ENCODE measurements at regions of chrX and their contacts with region 1.

Region 1: DNA sequence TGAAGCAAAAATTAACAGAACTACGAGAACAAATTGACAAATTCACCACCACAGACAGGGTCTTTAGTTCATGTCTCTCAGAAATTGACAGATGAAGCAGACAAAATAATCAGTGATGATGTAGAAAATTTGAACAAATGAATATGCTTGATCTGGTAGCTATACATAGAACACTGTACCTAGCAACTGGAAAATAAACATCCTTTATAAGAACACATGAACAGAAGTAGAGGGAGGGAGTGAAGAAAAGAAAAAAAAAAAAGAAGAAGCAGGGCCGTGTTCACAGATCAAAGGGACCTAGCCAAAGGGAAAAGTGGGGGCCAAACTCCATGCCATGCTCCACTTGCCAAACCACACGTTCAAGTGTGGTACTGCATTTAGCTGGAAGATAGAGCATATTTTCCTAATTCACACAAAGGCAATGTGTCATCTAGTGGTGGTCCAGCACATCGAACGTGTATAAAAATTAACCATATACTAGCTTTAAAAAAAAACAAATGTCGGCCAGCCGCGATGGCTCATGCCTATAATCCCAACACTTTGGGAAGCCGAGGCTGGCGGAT is 5.6 kb upstream of the THOC2 start:
- DNase-seq: no peak
- ATAC-seq: no peak
- H3K4me3 ChIP-seq: no peak overlapping the region
- H3K4me3 Mint-ChIP-seq: no peak overlapping the region
- H3K27ac ChIP-seq: no peak overlapping the region
- H3K27ac Mint-ChIP-seq: no peak overlapping the region
- H3K4me1 ChIP-seq: no peaks in the 10 kb centered on the region
- H3K4me1 Mint-ChIP-seq: peaks cover 0 to 3% (median 2%) of the 10 kb centered on the region in 3 donors
- H3K27me3 ChIP-seq: no peaks in the 10 kb centered on the region
- H3K27me3 Mint-ChIP-seq: peaks cover 1 to 4% of the 10 kb centered on the region in 2 donors

Region 2: DNA sequence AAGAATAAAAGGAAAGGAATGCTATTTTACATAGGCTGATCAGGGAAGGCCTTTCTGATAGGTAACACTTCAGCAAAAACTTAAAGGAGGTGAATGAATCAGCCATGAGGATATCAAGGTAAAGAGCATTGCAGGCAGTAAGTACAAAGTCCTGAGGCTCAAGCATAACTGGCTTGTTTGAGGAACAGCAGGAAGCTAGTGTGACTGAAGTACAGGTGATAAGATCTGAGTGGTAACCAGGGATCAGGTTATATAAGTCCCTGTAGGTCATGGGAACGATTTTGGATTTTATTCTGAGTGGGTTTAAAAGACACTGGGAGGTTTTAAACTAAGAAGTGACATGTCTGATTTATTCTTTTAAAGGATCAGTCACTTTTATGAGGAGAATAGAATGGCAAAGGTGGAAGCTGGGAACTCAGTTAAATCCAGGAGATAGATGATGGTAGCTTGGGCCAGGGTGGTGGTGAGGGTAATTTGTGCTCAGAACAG is 41.5 kb after region 1 on chrX:
- CTCF ChIA-PET with region 1: no interaction called
- POLR2A ChIA-PET with region 1: no interaction called
- DNase-seq: no peak
- ATAC-seq: no peak
- H3K4me3 ChIP-seq: no peak overlapping the region
- H3K4me3 Mint-ChIP-seq: no peak overlapping the region
- H3K27ac ChIP-seq: no peak overlapping the region
- H3K27ac Mint-ChIP-seq: no peak overlapping the region
- H3K4me1 ChIP-seq: peaks cover 0 to 2% of the 10 kb centered on the region in 2 experiments
- H3K4me1 Mint-ChIP-seq: peaks cover 0 to 3% (median 2%) of the 10 kb centered on the region in 3 donors
- H3K27me3 ChIP-seq: peaks cover 0 to 2% of the 10 kb centered on the region in 2 experiments
- H3K27me3 Mint-ChIP-seq: no peaks in the 10 kb centered on the region

Region 3: GRCh38 chrX:123818243-123818642 is 79.8 kb after region 1 on chrX:
- CTCF ChIA-PET with region 1: interaction called in 1 of 2 experiments, 11 read pairs
- POLR2A ChIA-PET with region 1: no interaction called
- DNase-seq: no peak
- ATAC-seq: no peak
- H3K4me3 ChIP-seq: no peak overlapping the region
- H3K4me3 Mint-ChIP-seq: no peak overlapping the region
- H3K27ac ChIP-seq: no peak overlapping the region
- H3K27ac Mint-ChIP-seq: no peak overlapping the region
- H3K4me1 ChIP-seq: no peaks in the 10 kb centered on the region
- H3K4me1 Mint-ChIP-seq: no peaks in the 10 kb centered on the region
- H3K27me3 ChIP-seq: no peaks in the 10 kb centered on the region
- H3K27me3 Mint-ChIP-seq: no peaks in the 10 kb centered on the region

Measured in T-cell (primary cell).